Activated CD8-positive, alpha-beta T cell treated with anti-CD3 and anti-CD28 coated beads, Interleukin-2, amount 10 ng/mL, durations not matched to agents 7 days and 5 days (primary cell): ENCODE measurements at regions of chr2 and their contacts with region 1.

Region 1: GRCh38 chr2:105114551-105114950 is 76.7 kb downstream of the MRPS9 start:
- DNase-seq: no peak
- ATAC-seq: no peak
- H3K4me3 Mint-ChIP-seq: no peak overlapping the region
- H3K27ac Mint-ChIP-seq: no peak overlapping the region
- H3K4me1 Mint-ChIP-seq: no peaks in the 10 kb centered on the region
- H3K27me3 Mint-ChIP-seq: no peaks in the 10 kb centered on the region

Region 2: GRCh38 chr2:105092797-105093196 is 21.8 kb before region 1 on chr2:
- CTCF ChIA-PET with region 1: interaction called, 12 read pairs
- POLR2A ChIA-PET with region 1: no interaction called
- DNase-seq: no peak
- ATAC-seq: no peak
- H3K4me3 Mint-ChIP-seq: no peak overlapping the region
- H3K27ac Mint-ChIP-seq: no peak overlapping the region
- H3K4me1 Mint-ChIP-seq: peaks cover under 1% of the 10 kb centered on the region
- H3K27me3 Mint-ChIP-seq: no peaks in the 10 kb centered on the region

Region 3: DNA sequence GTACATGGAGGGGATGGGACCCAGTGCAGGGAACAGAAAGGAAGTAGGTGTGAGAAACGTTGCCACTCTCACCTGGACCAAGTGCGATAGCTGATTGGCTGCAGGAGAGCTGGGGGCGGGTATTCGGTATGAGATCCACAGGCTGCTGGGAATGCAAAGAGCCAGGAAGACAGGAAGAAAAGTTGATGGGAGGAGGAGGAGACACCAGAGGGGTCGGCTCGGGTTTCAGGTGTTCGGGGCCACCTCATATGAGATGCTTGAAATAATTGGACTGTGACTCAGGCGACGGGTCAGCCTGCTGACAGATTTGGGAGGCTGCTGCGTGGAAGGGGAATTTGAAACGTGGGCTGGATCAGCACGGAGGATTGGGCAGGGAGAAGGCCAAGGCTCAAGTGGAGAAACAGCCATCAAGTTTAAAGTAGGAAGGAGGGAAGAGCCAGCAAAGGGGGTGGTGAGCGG is 11.6 kb before region 1 on chr2:
- CTCF ChIA-PET with region 1: interaction called, 20 read pairs
- POLR2A ChIA-PET with region 1: no interaction called
- DNase-seq: no peak
- ATAC-seq: no peak
- H3K4me3 Mint-ChIP-seq: no peak overlapping the region
- H3K27ac Mint-ChIP-seq: no peak overlapping the region
- H3K4me1 Mint-ChIP-seq: no peaks in the 10 kb centered on the region
- H3K27me3 Mint-ChIP-seq: no peaks in the 10 kb centered on the region

Region 4: DNA sequence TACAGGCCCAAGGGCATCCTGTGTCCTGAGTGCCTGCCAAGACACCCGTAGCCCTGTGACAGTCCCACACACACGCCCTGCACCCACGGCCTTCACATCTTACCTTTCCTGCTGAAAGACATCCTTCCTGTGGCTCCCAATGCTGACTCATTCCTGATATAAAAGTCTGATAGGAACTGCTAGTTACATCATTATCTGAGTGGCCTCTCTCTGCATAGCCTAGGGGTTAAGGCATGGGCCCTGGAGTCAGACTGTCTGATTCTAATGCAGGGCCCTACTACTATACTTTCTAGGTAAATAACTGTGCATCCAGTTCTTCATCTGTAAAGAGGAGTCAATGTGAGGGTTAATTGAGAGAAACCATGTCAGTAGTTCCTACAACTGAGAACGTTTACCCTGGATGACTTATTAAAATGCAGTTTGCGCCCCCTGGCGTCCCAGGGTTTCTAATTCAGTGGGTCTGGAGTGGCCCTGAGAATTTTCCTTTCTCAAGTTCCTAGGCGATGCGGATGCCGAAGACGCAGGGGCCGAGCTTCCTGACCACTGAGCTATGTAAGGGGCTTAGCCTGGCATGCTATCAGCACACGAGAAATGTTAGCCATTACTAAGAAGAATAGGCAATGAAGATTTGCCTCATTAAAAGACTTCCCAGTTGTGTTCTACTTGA is 121.0 kb after region 1 on chr2:
- CTCF ChIA-PET with region 1: interaction called, 183 read pairs
- POLR2A ChIA-PET with region 1: no interaction called
- DNase-seq: peak; percentile 74
- ATAC-seq: peak; percentile 66
- H3K4me3 Mint-ChIP-seq: no peak overlapping the region
- H3K27ac Mint-ChIP-seq: no peak overlapping the region
- H3K4me1 Mint-ChIP-seq: peaks cover 13% of the 10 kb centered on the region
- H3K27me3 Mint-ChIP-seq: peaks cover 11% of the 10 kb centered on the region